B cell (primary cell): ENCODE measurements at regions of chr15 and their contacts with region 1.

Region 1: DNA sequence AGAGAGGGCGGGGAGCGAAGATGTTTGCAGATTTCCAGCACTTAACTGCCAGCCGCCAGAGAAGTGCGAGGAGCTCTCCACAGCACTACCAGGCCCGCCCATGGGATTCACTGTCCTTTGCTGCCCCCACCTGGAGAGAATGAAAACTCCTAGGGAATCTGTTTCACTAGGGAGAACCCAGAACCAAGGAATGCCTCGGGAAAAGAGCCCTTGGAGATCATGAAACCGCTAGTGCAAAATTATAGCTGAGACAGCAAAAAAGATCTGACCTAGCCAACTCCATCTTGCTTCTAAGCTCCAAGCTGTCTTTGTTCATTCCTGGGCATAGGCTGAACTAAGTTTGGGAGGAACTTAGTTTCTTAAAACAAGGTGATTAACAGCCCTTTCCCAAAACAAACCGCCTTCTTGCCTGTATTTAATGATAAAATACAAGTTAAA is 82.6 kb upstream of the GCNT3 start:
- DNase-seq: peak; percentile 82
- ATAC-seq: peak; percentile 69
- H3K4me3 ChIP-seq: no peak overlapping the region
- H3K4me3 Mint-ChIP-seq: no peak overlapping the region
- H3K27ac ChIP-seq: peak overlapping the region in 1 of 2 donors; percentile 30
- H3K27ac Mint-ChIP-seq: peak overlapping the region; percentile 54
- H3K4me1 ChIP-seq: peaks cover 18 to 33% of the 10 kb centered on the region in 2 donors
- H3K4me1 Mint-ChIP-seq: peaks cover 25% of the 10 kb centered on the region
- H3K27me3 ChIP-seq: no peaks in the 10 kb centered on the region
- H3K27me3 Mint-ChIP-seq: no peaks in the 10 kb centered on the region
- CTCF ChIP-seq: peak; percentile 86

Region 2: DNA sequence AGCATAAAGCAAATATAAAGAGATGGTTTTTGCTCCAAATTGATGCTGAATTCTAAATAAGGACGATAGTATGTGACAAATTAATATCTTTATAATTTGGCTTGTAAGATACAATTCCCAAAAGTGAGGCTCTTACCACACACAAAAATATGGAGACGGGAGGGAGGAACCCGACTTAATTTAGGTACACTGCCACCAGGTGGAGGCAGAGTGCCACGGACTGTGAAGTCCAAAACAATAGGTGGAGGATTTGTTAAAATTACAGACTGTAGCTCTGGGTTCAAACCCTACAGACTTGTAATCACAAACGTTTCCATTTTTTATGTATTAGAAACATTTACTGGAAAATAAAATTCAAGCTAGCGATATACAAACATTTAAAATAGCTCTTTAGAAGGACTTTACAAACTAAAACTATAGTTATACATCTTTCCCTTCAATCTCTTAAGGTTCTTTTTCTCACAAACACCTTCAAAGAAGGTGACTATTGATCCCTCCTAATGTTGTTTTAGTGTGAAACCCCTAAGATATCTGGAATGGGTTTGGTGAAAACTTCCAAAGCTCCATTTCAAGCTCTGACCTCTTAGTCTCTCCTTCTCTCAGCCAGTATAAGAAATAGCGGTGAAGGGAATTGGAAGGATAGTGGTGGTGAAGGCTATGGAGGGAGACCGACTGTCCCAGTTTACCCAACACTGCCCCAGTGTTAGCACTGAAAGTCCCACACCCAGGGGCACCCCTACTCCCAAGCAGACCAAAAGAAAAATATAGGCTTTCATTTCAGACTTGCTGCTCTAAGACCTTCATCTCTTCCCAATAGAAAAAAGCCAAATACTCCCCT is 1301.1 kb before region 1 on chr15:
- CTCF ChIA-PET with region 1: interaction called, 12 read pairs
- POLR2A ChIA-PET with region 1: no interaction called
- intact Hi-C with region 1: no loop called
- DNase-seq: peak; percentile 42
- ATAC-seq: no peak
- H3K4me3 ChIP-seq: no peak overlapping the region
- H3K4me3 Mint-ChIP-seq: no peak overlapping the region
- H3K27ac ChIP-seq: no peak overlapping the region
- H3K27ac Mint-ChIP-seq: no peak overlapping the region
- H3K4me1 ChIP-seq: no peaks in the 10 kb centered on the region
- H3K4me1 Mint-ChIP-seq: no peaks in the 10 kb centered on the region
- H3K27me3 ChIP-seq: no peaks in the 10 kb centered on the region
- H3K27me3 Mint-ChIP-seq: peaks cover 34% of the 10 kb centered on the region
- CTCF ChIP-seq: peak; percentile 58

Region 3: DNA sequence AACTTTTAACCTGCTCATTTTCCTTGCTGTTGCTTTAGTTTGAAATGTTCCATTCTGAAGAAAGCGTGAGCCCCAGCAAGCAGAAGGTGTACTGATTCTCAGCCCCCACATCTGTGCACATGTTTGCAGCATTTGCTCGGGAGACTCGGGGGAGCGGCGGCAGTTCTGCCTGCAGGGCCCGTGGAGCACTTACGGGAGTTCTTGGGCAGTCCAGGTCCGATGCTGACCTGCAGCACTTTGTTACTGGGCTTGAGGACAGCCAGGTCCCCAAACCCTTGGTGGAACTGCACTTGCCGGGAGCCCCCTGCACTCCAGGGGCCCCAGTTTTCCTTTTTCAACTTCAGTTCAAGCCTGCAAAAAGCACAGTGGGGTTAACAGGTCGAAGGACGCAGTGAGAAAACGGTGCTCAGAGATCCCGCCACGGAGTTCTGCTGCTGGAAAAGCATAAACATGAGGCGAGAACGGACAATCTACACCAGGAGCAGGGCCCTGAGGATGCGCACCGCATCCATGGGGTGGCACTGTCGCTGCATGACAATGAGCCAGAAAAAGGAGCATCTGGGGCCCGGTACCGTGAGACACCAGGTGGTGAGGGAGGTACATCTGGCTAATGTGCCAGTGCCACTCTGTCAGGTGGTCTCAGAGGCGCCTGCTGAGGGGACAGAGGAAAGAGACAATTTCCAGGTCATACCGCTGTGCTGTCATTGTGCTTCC is 367.9 kb before region 1 on chr15:
- CTCF ChIA-PET with region 1: interaction called, 15 read pairs
- POLR2A ChIA-PET with region 1: no interaction called
- intact Hi-C with region 1: no loop called
- DNase-seq: peak; percentile 31
- ATAC-seq: peak; percentile 41
- H3K4me3 ChIP-seq: no peak overlapping the region
- H3K4me3 Mint-ChIP-seq: no peak overlapping the region
- H3K27ac ChIP-seq: no peak overlapping the region
- H3K27ac Mint-ChIP-seq: no peak overlapping the region
- H3K4me1 ChIP-seq: peaks cover 0 to 5% of the 10 kb centered on the region in 2 donors
- H3K4me1 Mint-ChIP-seq: no peaks in the 10 kb centered on the region
- H3K27me3 ChIP-seq: no peaks in the 10 kb centered on the region
- H3K27me3 Mint-ChIP-seq: no peaks in the 10 kb centered on the region
- CTCF ChIP-seq: peak; percentile 33

Region 4: DNA sequence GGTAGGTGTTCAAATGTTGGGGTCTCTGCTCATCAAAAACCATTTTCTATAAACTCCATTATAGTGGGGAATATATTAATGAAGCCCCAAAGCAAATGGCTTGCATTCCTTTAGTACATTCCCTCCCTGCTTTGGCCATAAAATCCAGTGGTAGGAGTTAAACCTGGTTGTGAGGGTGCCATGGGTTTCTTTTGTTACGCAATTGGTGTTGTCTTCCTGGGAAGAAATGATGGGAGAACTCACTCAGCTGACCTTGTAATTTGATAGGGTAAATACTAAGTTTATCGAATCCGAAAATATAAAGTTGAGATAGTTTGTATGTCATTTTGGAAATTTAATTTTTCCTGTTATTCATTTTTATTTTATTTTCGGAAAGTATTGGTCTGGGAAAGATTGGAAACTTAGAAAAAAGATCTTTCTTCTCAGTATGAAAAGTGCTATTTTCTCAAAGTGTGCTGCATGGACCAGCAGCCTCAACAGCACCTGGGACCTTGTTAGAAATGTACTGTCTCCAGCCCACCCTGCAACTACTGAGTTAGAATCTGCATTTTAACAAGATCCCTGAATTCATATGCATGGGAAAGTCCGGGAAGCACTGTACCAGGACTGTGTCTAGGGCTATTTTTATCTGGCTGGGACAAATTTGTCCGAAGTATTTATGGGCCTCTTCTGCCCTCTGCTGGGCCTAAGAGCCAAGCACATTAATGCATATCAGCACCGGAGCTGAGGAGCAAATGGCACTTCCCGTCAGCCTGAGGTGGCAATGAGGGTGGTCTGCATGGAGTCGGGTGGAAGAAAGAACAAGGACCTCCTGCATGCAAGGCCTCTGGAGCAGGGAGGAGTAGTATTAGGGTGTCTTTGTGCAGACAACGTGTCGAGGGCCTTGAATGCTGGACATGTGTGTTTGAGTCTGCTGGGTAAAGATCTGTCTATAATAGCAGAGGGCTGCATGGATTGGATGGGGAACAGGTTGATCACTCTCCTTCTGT is 36.3 kb before region 1 on chr15:
- CTCF ChIA-PET with region 1: interaction called, 98 read pairs
- POLR2A ChIA-PET with region 1: interaction called, 4 read pairs
- intact Hi-C with region 1: loop called (anchors 1 kb)
- DNase-seq: peak; percentile 80
- ATAC-seq: peak; percentile 88
- H3K4me3 ChIP-seq: no peak overlapping the region
- H3K4me3 Mint-ChIP-seq: no peak overlapping the region
- H3K27ac ChIP-seq: no peak overlapping the region
- H3K27ac Mint-ChIP-seq: no peak overlapping the region
- H3K4me1 ChIP-seq: peaks cover 8% of the 10 kb centered on the region in 2 donors
- H3K4me1 Mint-ChIP-seq: peaks cover 9% of the 10 kb centered on the region
- H3K27me3 ChIP-seq: no peaks in the 10 kb centered on the region
- H3K27me3 Mint-ChIP-seq: no peaks in the 10 kb centered on the region
- CTCF ChIP-seq: peak; percentile 99

Region 5: DNA sequence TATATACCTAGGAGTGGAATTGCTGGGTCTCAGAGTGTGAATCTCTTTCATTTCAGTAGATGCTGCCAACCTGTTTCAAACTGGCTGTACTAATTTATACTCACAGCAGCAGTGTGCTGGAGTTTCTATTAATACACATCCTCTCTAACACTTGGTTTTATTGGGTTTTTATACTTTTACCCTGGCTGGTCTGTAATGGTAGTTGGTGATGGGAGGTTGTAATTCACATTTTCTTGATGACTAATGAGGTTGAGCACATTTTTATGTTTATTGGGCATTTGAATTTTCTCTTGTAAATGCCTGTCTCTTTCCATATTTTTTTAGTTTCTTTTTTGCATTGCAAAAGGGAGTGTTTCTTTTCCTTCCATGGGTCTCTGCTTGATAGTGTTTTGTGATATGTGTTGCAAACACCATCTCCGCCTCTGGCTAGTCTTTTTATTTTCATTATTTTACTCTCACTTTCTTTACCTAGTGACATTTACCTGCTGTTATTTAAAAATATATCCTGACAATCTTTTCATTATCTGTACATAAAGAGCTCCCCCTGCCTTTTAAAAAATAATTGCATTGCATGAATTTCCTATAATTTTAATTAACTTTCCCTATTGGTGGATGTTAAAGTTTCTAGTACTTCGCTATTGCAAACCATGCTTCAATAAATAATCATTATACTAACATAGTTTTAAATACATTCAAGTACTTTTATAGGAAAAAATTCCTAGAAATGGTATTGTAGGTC is 33.6 kb after region 1 on chr15:
- CTCF ChIA-PET with region 1: interaction called, 13 read pairs
- POLR2A ChIA-PET with region 1: no interaction called
- intact Hi-C with region 1: no loop called
- DNase-seq: no peak
- ATAC-seq: no peak
- H3K4me3 ChIP-seq: no peak overlapping the region
- H3K4me3 Mint-ChIP-seq: no peak overlapping the region
- H3K27ac ChIP-seq: no peak overlapping the region
- H3K27ac Mint-ChIP-seq: no peak overlapping the region
- H3K4me1 ChIP-seq: no peaks in the 10 kb centered on the region
- H3K4me1 Mint-ChIP-seq: no peaks in the 10 kb centered on the region
- H3K27me3 ChIP-seq: no peaks in the 10 kb centered on the region
- H3K27me3 Mint-ChIP-seq: no peaks in the 10 kb centered on the region
- CTCF ChIP-seq: peak; percentile 35

Region 6: DNA sequence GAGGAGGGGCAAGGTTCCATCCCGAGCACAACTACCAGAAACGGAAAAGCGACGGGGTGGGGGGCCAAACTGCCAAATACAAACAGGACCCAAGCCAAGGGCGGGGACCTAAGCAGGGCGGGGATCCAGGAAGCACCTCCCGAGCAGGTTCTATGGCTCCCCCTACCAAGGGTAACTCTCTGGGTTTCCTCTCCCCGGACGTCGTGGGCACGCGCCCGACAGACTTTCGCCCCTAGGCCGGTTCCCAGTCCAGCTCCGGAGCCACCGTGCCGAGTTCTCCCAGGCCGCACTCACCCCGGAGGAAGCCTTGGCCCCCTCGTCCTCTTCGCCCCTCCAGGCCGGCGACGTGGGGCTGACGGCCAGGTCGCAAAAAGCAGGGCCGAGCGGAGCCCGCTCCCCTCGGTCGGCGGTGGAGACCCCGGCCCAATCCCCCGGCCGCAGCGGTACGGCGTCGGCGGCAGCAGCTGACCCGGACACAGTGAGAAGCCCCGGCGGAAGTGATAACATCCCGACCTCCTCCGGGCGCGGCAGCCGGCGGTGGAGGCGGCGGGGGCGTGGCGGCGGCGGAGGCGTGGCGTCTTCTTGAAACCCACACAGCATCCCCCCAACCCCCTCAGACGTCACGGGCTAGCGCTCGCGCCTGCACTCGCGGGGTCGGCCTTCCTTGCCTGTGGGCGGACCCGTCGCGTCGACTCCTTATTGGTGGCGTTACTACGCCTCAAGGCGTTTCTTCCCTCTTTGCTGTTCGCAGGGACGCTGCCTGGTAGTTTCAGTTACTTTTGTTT is 160.0 kb after region 1 on chr15 and contains the start of gene BNIP2:
- CTCF ChIA-PET with region 1: interaction called, 14 read pairs
- POLR2A ChIA-PET with region 1: no interaction called
- intact Hi-C with region 1: loop called (anchors 5 kb)
- DNase-seq: peak; percentile 99
- ATAC-seq: peak; percentile 89
- H3K4me3 ChIP-seq: peak within 1 kb of the TSS; percentile 66 to 99 (median 97)
- H3K4me3 Mint-ChIP-seq: peak within 1 kb of the TSS; percentile 89
- H3K27ac ChIP-seq: peak within 1 kb of the TSS; percentile 93 to 98
- H3K27ac Mint-ChIP-seq: peak within 1 kb of the TSS; percentile 98
- H3K4me1 ChIP-seq: peaks cover 43% of the 10 kb centered on the region in 2 donors
- H3K4me1 Mint-ChIP-seq: peaks cover 48% of the 10 kb centered on the region
- H3K27me3 ChIP-seq: no peaks in the 10 kb centered on the region
- H3K27me3 Mint-ChIP-seq: no peaks in the 10 kb centered on the region
- CTCF ChIP-seq: no peak
- total RNA-seq, gene BNIP2: 91.2 and 112 TPM in 2 replicates

Region 7: GRCh38 chr15:59798605-59798917 is 269.6 kb after region 1 on chr15:
- CTCF ChIA-PET with region 1: no interaction called
- POLR2A ChIA-PET with region 1: no interaction called
- intact Hi-C with region 1: no loop called
- DNase-seq: no peak
- ATAC-seq: no peak
- H3K4me3 ChIP-seq: no peak overlapping the region
- H3K4me3 Mint-ChIP-seq: no peak overlapping the region
- H3K27ac ChIP-seq: no peak overlapping the region
- H3K27ac Mint-ChIP-seq: no peak overlapping the region
- H3K4me1 ChIP-seq: no peaks in the 10 kb centered on the region
- H3K4me1 Mint-ChIP-seq: peaks cover 7% of the 10 kb centered on the region
- H3K27me3 ChIP-seq: peaks cover 0 to 13% (median 2%) of the 10 kb centered on the region in 4 experiments
- H3K27me3 Mint-ChIP-seq: peaks cover 38% of the 10 kb centered on the region
- CTCF ChIP-seq: no peak